H1 (cell line): ENCODE measurements at regions of chr18 and their contacts with region 1.

Region 1: GRCh38 chr18:78984941-78985784 is 5.5 kb downstream of the SALL3 start:
- DNase-seq: peak in 1 of 2 experiments; percentile 51
- H3K4me3 ChIP-seq: peak overlapping the region; percentile 25 to 75 (median 36); a peak in 7 of 8 replicates
- H3K27ac ChIP-seq: no peak overlapping the region
- H3K4me1 ChIP-seq: peaks cover 13 to 31% (median 19%) of the 10 kb centered on the region in 4 experiments
- H3K27me3 ChIP-seq: peaks cover 0 to 4% (median 2%) of the 10 kb centered on the region in 4 experiments; a peak in 2 of 7 replicates
- CTCF ChIP-seq: peak; percentile 44 to 80 (median 56)
- EP300 ChIP-seq: no peak
- POLR2A ChIP-seq: no peak
- RAD21 ChIP-seq: peak; percentile 68 to 71

Region 2: DNA sequence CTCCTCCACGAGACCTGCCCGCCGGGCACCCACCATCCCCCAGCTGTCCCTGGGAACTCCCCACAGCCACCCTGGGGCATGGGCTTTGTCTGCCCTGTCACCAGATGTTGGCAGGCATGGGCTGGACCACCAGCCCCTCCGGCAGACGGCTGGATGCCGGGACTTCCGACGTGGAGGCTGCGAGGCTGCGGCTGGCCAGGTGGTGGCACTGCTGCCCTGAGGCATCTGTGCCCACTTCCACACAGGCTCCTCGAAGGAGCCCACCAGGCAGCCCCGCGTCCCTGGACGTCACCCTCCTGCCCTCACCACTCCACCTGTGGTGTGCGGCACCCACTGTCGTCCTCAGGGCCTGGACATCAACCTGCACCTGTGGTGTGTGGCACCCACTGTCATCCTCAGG is 325.4 kb before region 1 on chr18:
- CTCF ChIA-PET with region 1: interaction called, 10 read pairs
- POLR2A ChIA-PET with region 1: interaction called, 3 read pairs
- DNase-seq: peak; percentile 13 to 87
- H3K4me3 ChIP-seq: no peak overlapping the region
- H3K27ac ChIP-seq: no peak overlapping the region
- H3K4me1 ChIP-seq: no peaks in the 10 kb centered on the region
- H3K27me3 ChIP-seq: no peaks in the 10 kb centered on the region
- CTCF ChIP-seq: peak; percentile 88 to 97 (median 92)
- EP300 ChIP-seq: no peak
- POLR2A ChIP-seq: no peak
- RAD21 ChIP-seq: peak; percentile 95

Region 3: GRCh38 chr18:78875268-78875997 is 109.7 kb before region 1 on chr18:
- CTCF ChIA-PET with region 1: interaction called, 21 read pairs
- POLR2A ChIA-PET with region 1: interaction called, 4 read pairs
- DNase-seq: peak; percentile 36 to 73
- H3K4me3 ChIP-seq: no peak overlapping the region
- H3K27ac ChIP-seq: no peak overlapping the region
- H3K4me1 ChIP-seq: no peaks in the 10 kb centered on the region; a peak in 1 of 7 replicates
- H3K27me3 ChIP-seq: peaks cover 0 to 2% (median 0%) of the 10 kb centered on the region in 4 experiments; a peak in 1 of 7 replicates
- CTCF ChIP-seq: peak; percentile 75 to 84 (median 78)
- EP300 ChIP-seq: no peak
- POLR2A ChIP-seq: no peak
- RAD21 ChIP-seq: peak; percentile 65 to 71

Region 4: DNA sequence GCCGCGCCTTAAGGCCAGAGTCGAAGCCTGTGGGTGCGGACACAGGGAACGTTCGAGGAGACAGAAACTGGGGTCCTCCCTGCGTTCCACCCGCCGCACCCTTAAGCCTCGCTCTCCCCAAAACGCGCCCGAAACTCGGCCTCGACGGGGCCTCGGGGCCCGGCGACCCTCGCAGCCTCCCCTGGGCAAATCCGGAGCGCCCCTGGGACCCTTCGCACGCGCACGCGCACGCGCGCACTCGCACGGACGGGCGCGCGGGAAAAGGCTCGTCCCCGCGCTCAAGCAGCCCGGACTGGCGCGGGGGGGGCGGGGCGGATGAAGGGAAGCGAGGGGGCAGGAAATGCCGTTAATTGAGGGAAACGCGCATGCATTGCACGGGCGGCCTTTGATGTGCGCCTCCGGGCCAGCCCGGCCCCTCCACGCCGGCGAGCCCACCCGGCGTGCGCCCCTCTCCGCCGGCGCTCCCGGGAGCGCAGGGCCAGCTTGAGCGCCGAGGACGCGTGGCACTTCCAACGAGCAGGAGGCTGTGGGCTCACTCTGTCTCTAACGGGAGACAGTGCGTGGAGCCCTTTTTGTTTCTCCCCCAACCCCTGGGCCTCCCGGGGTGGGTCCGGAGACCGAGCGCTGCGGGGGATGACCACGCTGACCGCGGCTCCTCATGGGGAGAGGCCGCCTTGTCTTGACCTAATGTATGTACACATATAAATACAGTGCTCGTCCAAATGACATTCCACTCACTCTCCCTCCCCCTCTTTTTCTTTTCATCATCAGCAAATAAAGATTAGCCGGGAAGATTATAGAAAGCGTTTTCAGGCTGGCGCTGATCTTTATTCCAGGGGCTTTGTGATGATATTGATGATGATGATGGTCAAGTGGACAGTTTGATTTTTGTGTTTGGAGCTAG is 10.8 kb before region 1 on chr18:
- CTCF ChIA-PET with region 1: interaction called, 13 read pairs
- POLR2A ChIA-PET with region 1: interaction called, 5 read pairs
- DNase-seq: peak in 1 of 2 experiments; percentile 64
- H3K4me3 ChIP-seq: peak overlapping the region; percentile 21 to 60 (median 38)
- H3K27ac ChIP-seq: no peak overlapping the region
- H3K4me1 ChIP-seq: peaks cover 9 to 34% (median 25%) of the 10 kb centered on the region in 4 experiments
- H3K27me3 ChIP-seq: peaks cover 54 to 91% (median 80%) of the 10 kb centered on the region in 4 experiments
- CTCF ChIP-seq: no peak
- EP300 ChIP-seq: no peak
- POLR2A ChIP-seq: no peak
- RAD21 ChIP-seq: no peak

Region 5: DNA sequence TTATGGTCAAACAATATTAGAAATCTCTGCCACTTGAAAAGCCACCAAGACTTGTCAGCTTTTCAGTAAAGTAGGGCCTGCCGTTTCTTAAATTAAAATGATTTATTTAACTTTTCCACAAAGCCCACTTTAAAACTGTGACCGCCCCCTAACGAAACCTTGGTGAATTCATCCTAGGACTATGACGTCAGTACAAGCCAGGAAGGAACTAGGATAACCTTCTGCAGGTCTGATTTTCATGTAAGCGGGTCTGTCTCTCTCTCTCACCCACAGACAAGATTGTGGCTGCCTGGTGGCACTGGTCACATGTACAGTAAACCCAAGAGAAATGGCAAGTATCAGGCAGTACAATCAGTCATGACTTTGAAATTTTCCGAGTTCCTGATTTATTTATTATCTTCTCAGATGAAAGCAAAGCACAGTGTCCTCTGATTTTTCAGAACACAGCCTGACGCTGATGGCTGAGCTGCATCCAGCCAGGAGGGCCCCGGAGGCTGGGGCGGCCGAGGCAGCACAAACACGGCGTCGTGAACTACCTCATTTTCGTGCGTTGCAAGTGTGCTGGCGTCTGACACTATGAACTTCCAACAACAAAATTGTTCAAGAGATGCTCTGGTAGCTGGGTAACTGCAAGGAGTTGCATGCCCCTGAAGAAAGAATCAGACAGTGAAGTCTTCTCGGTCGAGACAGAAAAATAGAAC is 13.4 kb after region 1 on chr18:
- CTCF ChIA-PET with region 1: interaction called, 10 read pairs
- POLR2A ChIA-PET with region 1: interaction called, 5 read pairs
- DNase-seq: no peak
- H3K4me3 ChIP-seq: no peak overlapping the region
- H3K27ac ChIP-seq: no peak overlapping the region
- H3K4me1 ChIP-seq: no peaks in the 10 kb centered on the region
- H3K27me3 ChIP-seq: no peaks in the 10 kb centered on the region
- CTCF ChIP-seq: peak in 2 of 3 experiments; percentile 14 to 27; a peak in 2 of 4 replicates
- EP300 ChIP-seq: no peak
- POLR2A ChIP-seq: no peak
- RAD21 ChIP-seq: peak; percentile 25 to 47

Region 6: DNA sequence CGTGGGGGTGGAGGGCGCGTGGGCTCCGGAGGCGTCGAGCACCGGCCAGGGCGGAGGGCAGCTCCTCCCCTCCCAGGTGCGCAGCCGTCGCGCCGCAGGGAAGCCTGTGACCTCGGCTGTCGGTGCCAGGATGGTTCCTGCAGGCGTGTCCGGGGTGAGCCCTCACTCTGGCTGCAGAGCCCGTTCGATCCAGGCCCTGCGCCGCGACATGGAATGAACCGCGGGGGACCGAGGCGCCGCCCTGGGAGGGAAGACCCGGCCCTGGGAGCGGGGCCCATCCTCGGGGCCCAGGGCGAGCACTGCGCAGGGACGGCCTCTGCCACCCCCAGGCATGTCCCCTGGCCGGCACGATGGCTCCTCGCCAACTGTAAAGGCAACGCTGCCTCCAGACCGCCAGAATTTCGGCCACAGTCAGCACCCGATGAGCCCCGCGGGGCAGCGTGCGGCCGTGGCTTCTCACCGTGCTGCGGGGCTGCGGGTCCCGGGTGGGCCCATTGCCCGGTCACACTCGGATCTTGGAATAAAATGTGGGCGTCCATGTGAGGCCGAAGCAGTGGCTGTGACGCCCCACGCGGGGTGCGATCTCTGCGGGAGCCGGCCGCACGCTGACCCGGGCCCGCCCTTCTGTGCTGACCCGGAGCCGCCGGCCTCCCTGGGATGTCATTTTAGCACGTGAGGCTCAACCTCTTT is 21.1 kb after region 1 on chr18:
- CTCF ChIA-PET with region 1: interaction called, 14 read pairs
- POLR2A ChIA-PET with region 1: interaction called, 5 read pairs
- DNase-seq: no peak
- H3K4me3 ChIP-seq: no peak overlapping the region
- H3K27ac ChIP-seq: no peak overlapping the region
- H3K4me1 ChIP-seq: no peaks in the 10 kb centered on the region
- H3K27me3 ChIP-seq: no peaks in the 10 kb centered on the region
- CTCF ChIP-seq: no peak
- EP300 ChIP-seq: no peak
- POLR2A ChIP-seq: no peak
- RAD21 ChIP-seq: no peak